HEK293 (cell line): ENCODE measurements at regions of chr1 and their contacts with region 1.

Region 1: GRCh38 chr1:15272009-15272788 is 25.2 kb downstream of the FHAD1 start:
- H3K4me3 ChIP-seq: no peak overlapping the region
- H3K27ac ChIP-seq: no peak overlapping the region
- H3K4me1 ChIP-seq: no peaks in the 10 kb centered on the region
- CTCF ChIP-seq: peak; percentile 79; the same call in 1 of the 2 replicates

Region 2: DNA sequence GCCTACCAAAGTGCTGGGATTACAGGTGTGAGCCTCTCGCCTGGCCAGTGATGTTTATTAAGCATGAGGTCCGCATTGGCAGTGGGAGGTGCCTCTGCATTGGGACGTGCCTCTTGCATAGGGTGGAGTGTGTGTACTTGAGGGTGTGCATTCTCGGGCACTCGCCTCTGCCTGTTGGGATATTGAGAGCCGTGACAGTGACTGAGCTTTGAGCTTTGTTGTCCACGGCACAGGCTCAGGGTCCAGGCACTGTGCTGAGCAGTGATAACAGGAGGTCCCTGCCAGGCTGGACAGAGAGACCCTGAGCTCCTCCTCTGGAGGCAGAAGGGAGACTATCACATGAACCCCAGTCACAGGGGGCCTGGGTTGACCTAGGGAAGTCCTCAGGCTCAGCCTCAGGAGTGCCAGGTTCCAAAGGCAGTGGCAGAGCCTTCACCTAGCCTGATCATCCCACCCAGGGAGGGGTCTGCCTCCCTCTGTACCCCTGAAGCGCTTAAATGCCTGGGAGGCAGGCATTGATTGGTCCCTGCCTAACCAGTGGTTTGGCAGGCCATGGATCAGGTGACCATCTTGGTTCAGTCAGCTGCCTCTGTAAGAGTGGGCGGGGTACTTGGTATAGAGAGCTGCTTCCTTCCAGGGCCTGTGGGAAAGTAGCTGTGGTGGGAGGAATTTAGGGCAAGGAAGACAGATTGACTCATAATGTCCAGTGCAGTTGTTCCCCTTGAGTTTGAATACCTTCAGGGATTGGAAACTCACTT is 332.5 kb before region 1 on chr1:
- CTCF ChIA-PET with region 1: no interaction called
- POLR2A ChIA-PET with region 1: no interaction called
- H3K4me3 ChIP-seq: no peak overlapping the region
- H3K27ac ChIP-seq: no peak overlapping the region
- H3K4me1 ChIP-seq: 0 out of 2 replicates have a peak, but pooled peaks cover 3% of the 10 kb centered on the region
- CTCF ChIP-seq: no peak

Region 3: GRCh38 chr1:15100121-15100874 is 171.9 kb before region 1 on chr1:
- CTCF ChIA-PET with region 1: no interaction called
- POLR2A ChIA-PET with region 1: no interaction called
- H3K4me3 ChIP-seq: no peak overlapping the region
- H3K27ac ChIP-seq: no peak overlapping the region
- H3K4me1 ChIP-seq: no peaks in the 10 kb centered on the region
- CTCF ChIP-seq: peak; percentile 92

Region 4: DNA sequence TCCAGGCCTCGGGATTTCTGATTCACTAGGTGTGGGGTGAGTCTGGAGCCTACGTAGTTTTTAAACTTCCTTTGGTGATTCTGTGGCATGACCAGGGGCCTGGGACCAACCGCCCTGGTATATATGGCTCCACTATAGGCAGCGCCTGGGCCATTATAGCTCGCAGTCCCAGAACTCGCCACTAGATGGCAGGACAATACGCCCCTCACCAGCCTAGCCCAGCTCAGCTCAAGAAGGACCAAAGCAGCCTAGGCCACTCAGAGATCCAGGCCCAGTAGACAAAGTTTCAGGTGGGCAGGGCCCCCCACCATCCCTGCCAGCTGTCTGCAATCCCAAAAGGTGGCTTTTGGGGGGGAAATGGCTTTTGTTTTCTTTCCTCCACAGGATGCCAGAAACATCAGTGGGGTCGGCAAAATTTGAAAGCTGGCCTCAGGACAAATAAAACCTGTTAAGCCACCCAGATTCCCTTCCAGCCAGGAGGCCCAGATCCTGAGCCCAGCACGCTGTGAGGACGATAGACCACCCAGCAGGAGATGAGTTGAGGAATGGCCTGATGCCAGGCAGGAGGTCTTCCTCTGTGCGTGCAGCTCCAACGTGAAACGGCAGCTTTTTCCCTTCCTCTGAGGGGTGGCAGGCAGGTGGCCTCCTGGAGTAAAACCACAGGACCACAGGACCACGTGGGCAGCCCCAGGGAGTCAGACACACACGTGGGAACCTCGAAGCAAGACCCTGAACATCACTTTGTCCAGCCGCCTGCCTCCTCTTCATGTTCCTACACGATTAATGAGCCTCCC is 143.5 kb before region 1 on chr1:
- CTCF ChIA-PET with region 1: interaction called, 73 read pairs
- POLR2A ChIA-PET with region 1: interaction called, 6 read pairs
- H3K4me3 ChIP-seq: no peak overlapping the region
- H3K27ac ChIP-seq: no peak overlapping the region
- H3K4me1 ChIP-seq: no peaks in the 10 kb centered on the region
- CTCF ChIP-seq: 0 out of 2 replicates have a peak, but pooled peaks have one; percentile 33

Region 5: DNA sequence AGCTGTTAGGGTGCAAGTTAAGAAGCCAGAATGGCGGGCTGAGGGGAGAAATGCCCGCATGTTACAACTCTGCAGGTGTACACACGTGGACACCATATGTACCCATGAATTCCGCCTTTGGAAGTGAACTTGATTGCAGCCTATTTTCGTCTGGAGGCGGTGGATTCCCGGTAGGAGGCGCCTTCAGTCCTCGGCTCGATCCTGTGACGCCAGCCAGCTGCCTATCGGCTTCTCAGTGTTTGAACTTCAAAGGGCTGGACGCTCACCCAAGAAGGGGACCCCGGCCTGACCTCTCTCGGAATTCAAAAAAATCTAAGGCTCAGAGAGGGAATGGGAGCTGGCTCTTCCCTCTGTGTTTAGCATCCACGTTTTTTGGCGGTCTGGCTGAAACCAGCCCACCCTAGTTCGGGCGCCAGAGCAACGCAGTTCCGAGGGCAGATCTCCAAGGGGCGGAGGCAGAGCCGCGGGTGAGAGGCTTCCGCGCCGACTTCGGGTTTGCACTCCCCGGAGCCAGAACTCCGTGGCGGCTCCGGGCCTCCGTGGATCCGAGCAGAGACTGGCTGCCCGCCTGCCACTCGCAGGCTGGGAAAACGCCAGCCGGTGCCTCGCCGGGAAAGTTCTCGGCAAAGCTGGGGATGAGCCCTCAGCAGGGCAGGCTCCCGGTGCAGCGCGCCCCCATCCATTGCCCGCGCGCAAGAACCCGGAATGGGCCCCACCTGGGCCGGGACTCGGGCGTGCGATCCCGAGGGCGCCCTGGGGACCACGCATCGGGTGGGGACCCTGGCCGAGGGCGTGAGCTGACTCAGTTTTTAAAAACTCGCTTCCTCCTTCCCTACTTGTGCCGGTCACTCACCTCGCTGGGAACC is 119.6 kb before region 1 on chr1:
- CTCF ChIA-PET with region 1: interaction called, 59 read pairs
- POLR2A ChIA-PET with region 1: interaction called, 3 read pairs
- H3K4me3 ChIP-seq: peak overlapping the region; percentile 60
- H3K27ac ChIP-seq: peak overlapping the region; percentile 49; the same call in 1 of the 2 replicates
- H3K4me1 ChIP-seq: 0 out of 2 replicates have a peak, but pooled peaks cover 2% of the 10 kb centered on the region
- CTCF ChIP-seq: peak; percentile 37

Region 6: DNA sequence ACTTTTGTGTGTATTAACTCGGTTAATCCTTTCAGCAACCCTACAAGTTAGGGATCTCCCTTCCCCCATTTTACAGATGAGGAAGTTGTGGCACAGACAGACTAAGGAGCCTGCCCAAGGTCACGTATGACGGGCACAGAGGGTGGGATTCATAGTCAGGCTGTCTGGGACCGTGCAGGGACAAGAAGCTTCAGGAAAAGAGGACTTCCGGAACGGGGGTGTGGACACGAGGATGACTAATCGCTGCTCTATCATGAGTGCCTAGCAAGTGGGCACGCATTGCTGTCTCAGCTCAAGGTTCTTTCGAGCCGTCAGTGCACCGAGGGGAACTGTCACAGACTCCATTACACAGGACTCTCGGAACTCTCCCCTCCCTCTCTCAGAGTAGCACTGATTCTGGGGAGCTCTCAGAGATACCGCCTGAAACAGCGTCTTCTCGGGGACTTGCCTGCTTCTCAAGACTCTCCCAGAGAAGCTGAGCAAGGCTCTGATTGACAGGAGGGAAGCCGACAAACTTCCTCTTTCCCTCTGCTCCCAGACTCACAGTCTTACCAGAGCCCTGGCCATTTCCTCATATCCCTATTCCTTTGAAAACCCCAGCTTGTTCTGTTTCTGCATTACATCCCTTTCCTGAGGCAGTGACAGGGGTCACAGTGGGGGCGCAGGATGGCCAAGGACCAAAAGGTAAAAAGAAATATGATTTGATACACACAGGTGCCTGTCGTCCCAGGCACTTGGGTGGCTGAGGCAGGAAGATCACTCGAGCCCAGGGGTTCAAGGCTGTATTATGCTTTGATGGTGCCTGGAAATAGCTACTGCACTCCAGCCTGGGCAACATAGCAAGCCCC is 10.8 kb before region 1 on chr1:
- CTCF ChIA-PET with region 1: interaction called, 14 read pairs
- POLR2A ChIA-PET with region 1: interaction called, 3 read pairs
- H3K4me3 ChIP-seq: no peak overlapping the region
- H3K27ac ChIP-seq: no peak overlapping the region
- H3K4me1 ChIP-seq: no peaks in the 10 kb centered on the region
- CTCF ChIP-seq: no peak

Region 7: GRCh38 chr1:15304701-15305467 is 32.7 kb after region 1 on chr1:
- CTCF ChIA-PET with region 1: interaction called, 31 read pairs
- POLR2A ChIA-PET with region 1: no interaction called
- H3K4me3 ChIP-seq: no peak overlapping the region
- H3K27ac ChIP-seq: no peak overlapping the region
- H3K4me1 ChIP-seq: no peaks in the 10 kb centered on the region
- CTCF ChIP-seq: peak; percentile 67